ENCODE measurements at regions of chr12 and their contacts with region 1.

Region 1: DNA sequence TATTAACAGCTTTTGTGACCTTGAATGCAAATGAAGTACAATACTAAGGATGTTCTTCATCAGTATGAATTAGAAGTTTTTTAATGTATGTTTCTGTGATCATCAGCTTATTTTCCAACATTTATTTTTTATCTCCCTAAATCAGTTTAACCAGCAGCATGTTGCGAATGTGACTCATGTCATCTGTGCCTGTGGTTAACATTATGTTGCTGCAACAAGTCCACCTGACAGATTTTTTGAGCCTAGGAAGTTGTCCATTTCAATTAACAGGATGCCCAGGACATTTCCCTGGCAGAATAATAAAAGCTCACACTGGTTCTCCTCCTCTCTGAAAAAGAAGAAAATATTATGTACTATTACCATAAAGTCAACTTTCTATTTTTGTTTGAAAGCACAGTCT is 155.5 kb downstream of the SYT1 start:
- DNase-seq: no peak
- ATAC-seq: peak; percentile 62
- H3K4me3 ChIP-seq: no peak overlapping the region
- H3K27ac ChIP-seq: no peak overlapping the region
- H3K4me1 ChIP-seq: no peaks in the 10 kb centered on the region
- H3K27me3 ChIP-seq: no peaks in the 10 kb centered on the region
- CTCF ChIP-seq: no peak
- EP300 ChIP-seq: no peak
- POLR2A ChIP-seq: no peak
- RAD21 ChIP-seq: no peak

Region 2: GRCh38 chr12:79058331-79058730 is 38.2 kb after region 1 on chr12:
- CTCF ChIA-PET with region 1: no interaction called
- POLR2A ChIA-PET with region 1: no interaction called
- RAD21 ChIA-PET with region 1: interaction called, 5 read pairs
- SMC1A ChIA-PET with region 1: interaction called, 10 read pairs
- in situ Hi-C with region 1: no loop called
- intact Hi-C with region 1: loop called (anchors 5 kb)
- DNase-seq: no peak
- ATAC-seq: peak; percentile 72
- H3K4me3 ChIP-seq: no peak overlapping the region
- H3K27ac ChIP-seq: no peak overlapping the region
- H3K4me1 ChIP-seq: no peaks in the 10 kb centered on the region
- H3K27me3 ChIP-seq: no peaks in the 10 kb centered on the region
- CTCF ChIP-seq: no peak
- EP300 ChIP-seq: peak; percentile 22 to 42; a peak in 1 of 4 replicates
- POLR2A ChIP-seq: no peak
- RAD21 ChIP-seq: no peak

Region 3: DNA sequence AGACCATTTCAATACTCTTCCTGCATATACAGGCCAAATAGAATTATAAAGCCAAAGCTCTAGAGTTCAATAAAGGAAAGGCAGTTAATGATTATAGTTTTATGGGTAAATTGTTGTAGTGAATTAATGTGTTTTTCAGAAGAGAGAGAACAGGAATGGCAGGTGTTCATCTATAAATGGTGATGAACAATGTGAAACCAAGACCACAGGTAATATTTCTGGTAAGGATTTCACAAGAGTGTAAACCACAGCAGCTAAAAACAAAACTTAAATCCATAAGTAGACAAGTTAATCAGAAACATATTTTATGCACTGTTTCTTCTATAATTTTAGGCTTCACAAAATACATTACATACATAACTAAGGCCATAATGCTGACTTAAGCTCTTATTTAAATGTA is 48.9 kb after region 1 on chr12:
- CTCF ChIA-PET with region 1: no interaction called
- POLR2A ChIA-PET with region 1: no interaction called
- RAD21 ChIA-PET with region 1: interaction called, 7 read pairs
- SMC1A ChIA-PET with region 1: interaction called, 20 read pairs
- in situ Hi-C with region 1: no loop called
- intact Hi-C with region 1: no loop called
- DNase-seq: peak; percentile 45
- ATAC-seq: peak; percentile 87
- H3K4me3 ChIP-seq: no peak overlapping the region
- H3K27ac ChIP-seq: peak overlapping the region; percentile 24; the same call in 1 of the 2 replicates
- H3K4me1 ChIP-seq: peaks cover 5% of the 10 kb centered on the region; the same call in 1 of the 2 replicates
- H3K27me3 ChIP-seq: no peaks in the 10 kb centered on the region
- CTCF ChIP-seq: no peak
- EP300 ChIP-seq: peak; percentile 92 to 97
- POLR2A ChIP-seq: no peak
- RAD21 ChIP-seq: no peak

Region 4: DNA sequence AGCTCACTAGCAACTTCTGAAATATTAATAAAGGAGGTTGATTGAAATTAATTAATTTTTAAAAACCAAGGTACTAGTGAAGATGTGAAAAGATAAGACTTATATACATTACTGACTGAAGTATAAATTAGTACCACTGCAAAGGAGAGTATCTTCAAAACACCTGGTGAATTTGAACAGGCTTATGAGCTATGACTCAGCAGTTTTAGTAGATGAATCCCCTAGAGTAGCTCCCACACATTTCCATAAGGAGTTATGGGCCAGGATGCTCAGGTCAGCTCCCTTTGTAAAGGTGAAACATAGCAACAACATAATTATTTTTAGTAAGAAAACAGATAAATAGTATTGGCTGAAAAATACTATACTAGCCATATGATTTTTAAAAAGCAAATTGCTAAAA is 63.1 kb after region 1 on chr12:
- CTCF ChIA-PET with region 1: no interaction called
- POLR2A ChIA-PET with region 1: interaction called, 3 read pairs
- RAD21 ChIA-PET with region 1: interaction called, 4 read pairs
- SMC1A ChIA-PET with region 1: interaction called, 10 read pairs
- in situ Hi-C with region 1: no loop called
- intact Hi-C with region 1: no loop called
- DNase-seq: no peak
- ATAC-seq: no peak
- H3K4me3 ChIP-seq: no peak overlapping the region
- H3K27ac ChIP-seq: no peak overlapping the region
- H3K4me1 ChIP-seq: no peaks in the 10 kb centered on the region
- H3K27me3 ChIP-seq: no peaks in the 10 kb centered on the region
- CTCF ChIP-seq: no peak
- EP300 ChIP-seq: no peak
- POLR2A ChIP-seq: no peak
- RAD21 ChIP-seq: no peak

Region 5: GRCh38 chr12:80212938-80213645 is 1193.0 kb after region 1 on chr12:
- CTCF ChIA-PET with region 1: no interaction called
- POLR2A ChIA-PET with region 1: no interaction called
- RAD21 ChIA-PET with region 1: no interaction called
- SMC1A ChIA-PET with region 1: no interaction called
- in situ Hi-C with region 1: no loop called
- intact Hi-C with region 1: no loop called
- DNase-seq: no peak
- ATAC-seq: no peak
- H3K4me3 ChIP-seq: no peak overlapping the region
- H3K27ac ChIP-seq: no peak overlapping the region
- H3K4me1 ChIP-seq: peaks cover 6% of the 10 kb centered on the region
- H3K27me3 ChIP-seq: peaks cover 0 to 2% of the 10 kb centered on the region in 2 experiments; a peak in 2 of 4 replicates
- CTCF ChIP-seq: no peak
- EP300 ChIP-seq: no peak
- POLR2A ChIP-seq: no peak
- RAD21 ChIP-seq: no peak